OCI-LY7 (cell line): ENCODE measurements at regions of chr10 and their contacts with region 1.

Region 1: DNA sequence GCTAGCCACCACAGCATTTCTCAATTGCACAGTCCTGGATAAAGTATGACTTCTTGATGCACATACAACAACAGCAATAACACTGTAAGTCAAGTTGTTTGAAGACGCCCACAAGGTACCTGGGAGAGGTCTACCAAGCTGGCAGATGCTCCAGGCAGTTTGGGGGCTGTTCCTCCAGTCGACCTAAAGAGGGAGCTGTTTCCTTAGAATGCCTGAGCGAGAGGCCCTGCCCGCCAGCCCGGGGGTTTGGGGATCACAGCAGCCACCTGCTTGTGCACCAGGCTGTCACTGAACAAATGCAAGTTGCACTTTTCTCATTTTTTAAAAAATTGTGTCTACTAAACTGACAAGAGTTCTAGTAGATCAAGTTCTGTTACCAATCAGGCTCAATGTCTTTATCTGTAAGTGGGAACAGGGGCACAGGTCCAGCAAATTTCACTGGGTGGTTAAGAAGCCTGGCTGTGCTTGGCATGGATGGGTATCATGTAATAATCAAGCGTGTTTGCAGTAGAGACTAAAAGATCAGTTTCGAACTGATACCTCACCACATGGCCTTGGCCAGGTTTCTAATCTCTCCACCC is 193.8 kb upstream of the ADO start:
- DNase-seq: peak; percentile 91
- H3K4me3 ChIP-seq: no peak overlapping the region
- H3K27ac ChIP-seq: no peak overlapping the region
- H3K4me1 ChIP-seq: peaks cover 19% of the 10 kb centered on the region
- CTCF ChIP-seq: peak; percentile 99

Region 2: DNA sequence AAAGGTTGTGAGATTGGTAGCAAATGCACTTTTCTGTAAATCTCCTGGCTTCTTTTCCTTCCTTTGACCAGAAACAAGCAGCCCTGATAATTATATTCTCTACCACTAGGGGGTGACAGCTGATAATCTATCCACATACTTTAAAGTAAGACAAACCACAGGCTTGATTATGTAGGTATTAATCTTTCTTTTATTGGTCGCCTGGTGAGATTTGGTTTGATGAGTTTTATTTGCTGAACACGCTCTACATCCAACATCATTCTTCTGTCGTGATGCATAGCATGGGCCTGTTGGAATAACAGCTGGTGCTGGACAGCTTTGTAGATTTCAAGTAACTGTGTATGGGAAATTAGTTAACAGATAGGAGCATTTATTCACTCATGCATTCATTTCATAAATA is 173.0 kb before region 1 on chr10:
- CTCF ChIA-PET with region 1: no interaction called
- POLR2A ChIA-PET with region 1: no interaction called
- intact Hi-C with region 1: loop called (anchors 5 kb)
- DNase-seq: peak; percentile 78
- H3K4me3 ChIP-seq: no peak overlapping the region
- H3K27ac ChIP-seq: no peak overlapping the region
- H3K4me1 ChIP-seq: no peaks in the 10 kb centered on the region
- CTCF ChIP-seq: peak; percentile 97

Region 3: DNA sequence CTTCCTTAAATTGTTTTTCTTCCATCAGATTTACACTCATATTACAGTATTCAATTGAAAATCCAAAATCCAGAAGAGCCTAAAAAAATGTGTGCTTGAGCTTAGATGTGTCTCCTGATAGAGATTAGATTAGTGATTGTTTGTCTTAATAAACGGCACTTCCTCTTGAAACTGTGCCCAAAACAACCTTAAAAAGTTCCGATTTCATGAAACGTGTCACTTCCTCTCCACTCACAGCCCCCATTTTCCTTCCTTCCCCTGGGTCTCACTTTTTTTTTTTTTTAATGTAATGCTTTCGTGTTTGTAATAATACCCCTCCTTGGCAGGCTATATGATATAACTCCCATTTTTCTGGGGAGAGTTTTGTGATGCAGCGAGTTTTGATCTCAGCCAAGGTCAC is 79.0 kb after region 1 on chr10:
- CTCF ChIA-PET with region 1: no interaction called
- POLR2A ChIA-PET with region 1: no interaction called
- intact Hi-C with region 1: loop called (anchors 2 kb)
- DNase-seq: peak; percentile 65
- H3K4me3 ChIP-seq: peak overlapping the region; percentile 28
- H3K27ac ChIP-seq: no peak overlapping the region
- H3K4me1 ChIP-seq: peaks cover 31% of the 10 kb centered on the region
- CTCF ChIP-seq: no peak

Region 4: DNA sequence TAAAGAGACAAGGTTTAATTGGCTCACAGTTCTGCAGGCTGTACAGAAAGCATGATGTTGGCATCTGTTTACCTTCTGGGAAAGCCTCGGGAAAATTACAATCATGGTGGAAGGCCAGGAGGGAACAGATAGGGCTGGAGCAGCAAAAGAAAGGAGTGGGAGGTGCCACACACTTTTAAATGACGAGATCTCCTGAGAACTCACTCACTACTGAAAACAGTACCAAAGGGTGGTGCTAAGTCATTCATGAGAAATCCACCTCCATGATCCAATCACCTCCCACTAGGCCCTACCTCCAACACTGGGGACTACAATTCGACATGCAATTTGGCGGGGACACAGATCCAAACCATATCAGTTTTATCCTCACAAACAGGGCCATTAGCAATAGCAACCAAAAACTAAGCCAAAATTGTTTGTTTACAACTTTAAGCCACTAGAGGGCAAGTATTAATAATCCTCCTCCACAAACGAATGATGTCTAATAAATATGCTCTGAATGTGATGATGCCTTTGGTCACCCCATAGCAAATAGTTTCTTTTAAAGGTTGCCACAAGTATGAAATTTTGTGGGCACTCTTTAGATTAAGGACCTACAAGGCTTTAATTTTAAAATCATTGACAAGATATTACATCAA is 393.2 kb after region 1 on chr10:
- CTCF ChIA-PET with region 1: no interaction called
- POLR2A ChIA-PET with region 1: no interaction called
- intact Hi-C with region 1: loop called (anchors 5 kb)
- DNase-seq: peak; percentile 10
- H3K4me3 ChIP-seq: no peak overlapping the region
- H3K27ac ChIP-seq: no peak overlapping the region
- H3K4me1 ChIP-seq: no peaks in the 10 kb centered on the region
- CTCF ChIP-seq: peak; percentile 71

Region 5: GRCh38 chr10:63157845-63158624 is 547.3 kb after region 1 on chr10:
- CTCF ChIA-PET with region 1: no interaction called
- POLR2A ChIA-PET with region 1: interaction called, 3 read pairs
- intact Hi-C with region 1: loop called (anchors 5 kb)
- DNase-seq: peak; percentile 87
- H3K4me3 ChIP-seq: no peak overlapping the region
- H3K27ac ChIP-seq: no peak overlapping the region
- H3K4me1 ChIP-seq: no peaks in the 10 kb centered on the region
- CTCF ChIP-seq: peak; percentile 96

Region 6: DNA sequence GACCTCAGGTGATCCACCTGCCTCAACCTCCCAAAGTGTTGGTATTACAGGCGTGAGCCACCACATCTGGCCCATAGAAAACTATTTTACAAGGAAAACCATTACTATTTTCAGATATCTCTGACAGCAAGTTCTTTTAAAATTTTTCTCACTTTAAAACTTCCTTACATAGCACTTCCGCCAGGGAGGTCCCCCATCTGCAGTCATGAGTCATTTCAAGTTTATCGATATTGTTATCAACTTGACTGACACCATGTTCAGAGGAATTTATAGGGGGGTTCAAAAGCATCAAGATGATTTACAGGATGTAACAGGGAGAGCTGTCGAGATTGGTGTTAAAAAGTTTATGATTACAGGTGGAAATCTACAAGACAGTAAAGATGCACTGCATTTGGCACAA is 611.2 kb after region 1 on chr10:
- CTCF ChIA-PET with region 1: no interaction called
- POLR2A ChIA-PET with region 1: no interaction called
- intact Hi-C with region 1: no loop called
- DNase-seq: no peak
- H3K4me3 ChIP-seq: no peak overlapping the region
- H3K27ac ChIP-seq: no peak overlapping the region
- H3K4me1 ChIP-seq: peaks cover 57% of the 10 kb centered on the region
- CTCF ChIP-seq: no peak